Naive thymus-derived CD8-positive, alpha-beta T cell (primary cell): ENCODE measurements at regions of chr6 and their contacts with region 1.

Region 1: GRCh38 chr6:89834884-89835792 is 5.5 kb downstream of the CASP8AP2 start:
- DNase-seq: peak in 5 of 10 donors; percentile 8 to 34 (median 23)
- ATAC-seq: peak; percentile 80 to 87
- H3K4me3 Mint-ChIP-seq: peak overlapping the region; percentile 31 to 86 (median 76)
- H3K27ac Mint-ChIP-seq: peak overlapping the region; percentile 86 to 96 (median 92)
- H3K4me1 Mint-ChIP-seq: peaks cover 28 to 70% (median 61%) of the 10 kb centered on the region in 4 donors
- H3K27me3 Mint-ChIP-seq: no peaks in the 10 kb centered on the region

Region 2: GRCh38 chr6:89819336-89820130 is 15.6 kb before region 1 on chr6 and contains the start of gene MDN1:
- POLR2A ChIA-PET with region 1: interaction called, 79 read pairs
- DNase-seq: peak; percentile 73 to 91 (median 87)
- ATAC-seq: peak; percentile 93
- H3K4me3 Mint-ChIP-seq: peak within 1 kb of the TSS; percentile 90 to 98 (median 94)
- H3K27ac Mint-ChIP-seq: peak within 1 kb of the TSS; percentile 94 to 99 (median 96)
- H3K4me1 Mint-ChIP-seq: peaks cover 16 to 44% (median 41%) of the 10 kb centered on the region in 4 donors
- H3K27me3 Mint-ChIP-seq: no peaks in the 10 kb centered on the region
- polyA plus RNA-seq, gene MDN1: 3.4 to 10.2 (median 5.0) TPM